Activated CD8-positive, alpha-beta T cell treated with anti-CD3 and anti-CD28 coated beads for 36 hours (primary cell): ENCODE measurements at regions of chr12 and their contacts with region 1.

Region 1: GRCh38 chr12:76158518-76159321 is 74.2 kb upstream of the NAP1L1 start:
- DNase-seq: peak; percentile 94
- ATAC-seq: peak; percentile 95
- H3K4me3 Mint-ChIP-seq: peak overlapping the region; percentile 41
- H3K27ac Mint-ChIP-seq: peak overlapping the region; percentile 40
- H3K4me1 Mint-ChIP-seq: peaks cover 17% of the 10 kb centered on the region
- H3K27me3 Mint-ChIP-seq: peaks cover 7% of the 10 kb centered on the region
- CTCF ChIP-seq: peak; percentile 35

Region 2: GRCh38 chr12:76173756-76174155 is 15.0 kb after region 1 on chr12:
- CTCF ChIA-PET with region 1: no interaction called
- POLR2A ChIA-PET with region 1: no interaction called
- intact Hi-C with region 1: no loop called
- DNase-seq: no peak
- ATAC-seq: no peak
- H3K4me3 Mint-ChIP-seq: no peak overlapping the region
- H3K27ac Mint-ChIP-seq: no peak overlapping the region
- H3K4me1 Mint-ChIP-seq: no peaks in the 10 kb centered on the region
- H3K27me3 Mint-ChIP-seq: peaks cover 26% of the 10 kb centered on the region
- CTCF ChIP-seq: no peak

Region 3: GRCh38 chr12:76277480-76277879 is 118.8 kb after region 1 on chr12:
- CTCF ChIA-PET with region 1: interaction called, 3 read pairs
- POLR2A ChIA-PET with region 1: interaction called, 3 read pairs
- intact Hi-C with region 1: loop called (anchors 5 kb)
- DNase-seq: no peak
- ATAC-seq: no peak
- H3K4me3 Mint-ChIP-seq: no peak overlapping the region
- H3K27ac Mint-ChIP-seq: no peak overlapping the region
- H3K4me1 Mint-ChIP-seq: peaks cover 16% of the 10 kb centered on the region
- H3K27me3 Mint-ChIP-seq: peaks cover 18% of the 10 kb centered on the region
- CTCF ChIP-seq: no peak